Breast epithelium (tissue), 4 donors: ENCODE measurements at regions of chr12 and their contacts with region 1.

Region 1: GRCh38 chr12:128476266-128476665 is 209.3 kb downstream of the TMEM132C start:
- DNase-seq: no peak
- H3K4me3 ChIP-seq: no peak overlapping the region
- H3K27ac ChIP-seq: no peak overlapping the region
- H3K4me1 ChIP-seq: no peaks in the 10 kb centered on the region
- H3K27me3 ChIP-seq: no peaks in the 10 kb centered on the region
- CTCF ChIP-seq: no peak
- POLR2A ChIP-seq: no peak

Region 2: GRCh38 chr12:130058926-130059472 is 1582.7 kb after region 1 on chr12:
- intact Hi-C with region 1: loop called (anchors 5 kb)
- DNase-seq: no peak
- H3K4me3 ChIP-seq: no peak overlapping the region
- H3K27ac ChIP-seq: no peak overlapping the region
- H3K4me1 ChIP-seq: no peaks in the 10 kb centered on the region
- H3K27me3 ChIP-seq: no peaks in the 10 kb centered on the region
- CTCF ChIP-seq: no peak
- POLR2A ChIP-seq: no peak